Calu3 (cell line): ENCODE measurements at regions of chr3 and their contacts with region 1.

Region 1: GRCh38 chr3:157436583-157437291 is at the start of gene PTX3:
- DNase-seq: peak; percentile 58
- H3K4me3 Mint-ChIP-seq: peak within 1 kb of the TSS; percentile 69
- H3K27ac Mint-ChIP-seq: peak within 1 kb of the TSS; percentile 33
- H3K4me1 Mint-ChIP-seq: peaks cover 18% of the 10 kb centered on the region
- H3K27me3 Mint-ChIP-seq: no peaks in the 10 kb centered on the region
- CTCF ChIP-seq: no peak
- total RNA-seq, gene PTX3: 1.8 and 2.9 TPM in 2 replicates

Region 2: DNA sequence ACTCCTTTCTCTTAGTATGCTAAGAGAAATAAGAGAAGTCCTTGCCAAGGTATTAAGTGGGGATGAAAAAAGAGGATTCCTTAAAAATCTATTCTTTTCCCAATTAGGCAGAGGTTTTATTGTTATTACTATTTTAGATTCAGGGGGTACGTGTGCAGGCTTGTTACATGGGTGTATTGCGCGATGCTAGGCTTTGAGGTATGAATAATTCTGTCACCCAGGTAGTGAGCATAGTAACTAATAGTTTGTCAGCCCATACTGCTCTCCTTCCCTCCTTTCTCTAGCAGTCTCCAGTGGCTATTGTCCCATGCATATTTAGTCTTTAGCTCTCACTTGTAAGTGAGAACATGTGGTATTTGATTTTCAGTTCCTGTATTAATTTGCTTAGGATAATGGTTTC is 526.7 kb before region 1 on chr3:
- CTCF ChIA-PET with region 1: no interaction called
- intact Hi-C with region 1: no loop called
- DNase-seq: no peak
- H3K4me3 Mint-ChIP-seq: no peak overlapping the region
- H3K27ac Mint-ChIP-seq: no peak overlapping the region
- H3K4me1 Mint-ChIP-seq: no peaks in the 10 kb centered on the region
- H3K27me3 Mint-ChIP-seq: no peaks in the 10 kb centered on the region
- CTCF ChIP-seq: no peak

Region 3: GRCh38 chr3:157360044-157360443 is 76.7 kb before region 1 on chr3:
- CTCF ChIA-PET with region 1: interaction called, 7 read pairs
- intact Hi-C with region 1: loop called (anchors 5 kb)
- DNase-seq: peak; percentile 49
- H3K4me3 Mint-ChIP-seq: no peak overlapping the region
- H3K27ac Mint-ChIP-seq: peak overlapping the region; percentile 13
- H3K4me1 Mint-ChIP-seq: peaks cover 21% of the 10 kb centered on the region
- H3K27me3 Mint-ChIP-seq: no peaks in the 10 kb centered on the region
- CTCF ChIP-seq: no peak

Region 4: DNA sequence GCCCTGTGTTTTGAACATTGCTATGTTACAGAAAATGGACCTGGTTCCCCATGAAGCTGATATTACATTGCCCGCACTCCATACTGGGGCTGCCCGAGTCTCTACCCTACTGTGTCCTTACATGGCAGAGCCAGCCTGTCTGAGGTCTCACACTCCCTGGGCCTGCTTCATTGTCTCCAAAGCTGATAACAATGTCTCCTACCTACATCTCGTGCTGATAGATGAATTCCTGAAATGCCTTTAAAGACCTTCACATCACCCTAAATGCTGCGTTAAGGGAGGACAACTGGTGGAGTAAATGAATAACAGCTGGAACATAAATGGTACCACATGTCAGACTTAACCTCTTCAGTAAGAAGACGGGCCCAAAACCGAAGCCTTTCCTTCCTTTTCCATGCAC is 63.0 kb before region 1 on chr3:
- CTCF ChIA-PET with region 1: no interaction called
- intact Hi-C with region 1: no loop called
- DNase-seq: no peak
- H3K4me3 Mint-ChIP-seq: no peak overlapping the region
- H3K27ac Mint-ChIP-seq: no peak overlapping the region
- H3K4me1 Mint-ChIP-seq: peaks cover 21% of the 10 kb centered on the region
- H3K27me3 Mint-ChIP-seq: no peaks in the 10 kb centered on the region
- CTCF ChIP-seq: no peak

Region 5: GRCh38 chr3:157958457-157958856 is 521.7 kb after region 1 on chr3:
- CTCF ChIA-PET with region 1: no interaction called
- intact Hi-C with region 1: no loop called
- DNase-seq: no peak
- H3K4me3 Mint-ChIP-seq: no peak overlapping the region
- H3K27ac Mint-ChIP-seq: no peak overlapping the region
- H3K4me1 Mint-ChIP-seq: no peaks in the 10 kb centered on the region
- H3K27me3 Mint-ChIP-seq: no peaks in the 10 kb centered on the region
- CTCF ChIP-seq: no peak